Natural killer cell (primary cell): ENCODE measurements at regions of chr20 and their contacts with region 1.

Region 1: GRCh38 chr20:54649511-54649962 is 174.1 kb downstream of the DOK5 start:
- DNase-seq: peak; percentile 28 to 66
- ATAC-seq: peak in 1 of 3 donors; percentile 44
- H3K4me3 ChIP-seq: no peak overlapping the region
- H3K4me3 Mint-ChIP-seq: no peak overlapping the region
- H3K27ac ChIP-seq: no peak overlapping the region
- H3K27ac Mint-ChIP-seq: no peak overlapping the region
- H3K4me1 ChIP-seq: no peaks in the 10 kb centered on the region
- H3K4me1 Mint-ChIP-seq: no peaks in the 10 kb centered on the region
- H3K27me3 ChIP-seq: no peaks in the 10 kb centered on the region
- H3K27me3 Mint-ChIP-seq: peaks cover 9 to 15% of the 10 kb centered on the region in 2 donors
- CTCF ChIP-seq: peak; percentile 67

Region 2: DNA sequence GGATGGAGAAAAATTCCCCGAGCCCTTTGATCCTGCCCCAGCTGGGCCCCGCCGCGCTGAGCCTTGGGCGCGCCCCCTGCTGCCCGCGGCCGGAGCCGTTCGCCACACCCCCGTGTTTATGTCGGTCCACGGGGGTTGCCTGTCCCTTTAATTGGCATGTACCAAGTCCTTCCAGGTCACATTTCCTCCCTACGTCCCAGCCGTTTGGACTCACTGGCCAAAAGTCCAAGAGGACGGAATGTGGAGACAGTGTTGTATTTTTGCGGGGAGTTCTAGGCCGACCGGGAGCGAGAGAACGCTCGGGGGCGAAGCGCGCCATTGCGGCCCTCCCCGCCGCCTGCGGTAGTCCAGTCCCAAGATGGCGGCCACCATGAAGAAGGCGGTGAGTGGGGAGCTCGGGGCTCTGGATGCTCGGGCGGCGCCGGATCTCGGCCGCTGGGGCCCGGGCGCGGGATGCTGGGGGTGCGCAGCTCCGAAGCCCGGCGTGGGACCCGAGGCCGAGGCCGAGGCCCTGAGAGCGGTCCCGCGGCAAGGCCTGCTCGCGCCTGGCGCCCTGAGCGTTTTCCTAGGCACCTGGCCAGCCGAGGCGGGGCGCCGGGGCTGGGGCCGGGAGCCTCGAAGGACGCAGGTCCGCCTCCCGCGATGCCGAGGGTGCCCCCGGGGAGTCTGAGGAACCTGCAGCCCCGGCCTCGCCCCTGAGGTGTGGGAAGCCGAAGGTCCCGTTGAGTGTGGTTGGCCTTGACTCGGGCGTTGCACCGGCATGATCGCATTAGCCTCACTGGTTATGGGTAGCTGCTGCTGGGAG is 441.6 kb before region 1 on chr20 and contains the start of gene PFDN4:
- intact Hi-C with region 1: loop called (anchors 10 kb)
- DNase-seq: peak; percentile 77 to 87
- ATAC-seq: peak; percentile 92 to 94 (median 94)
- H3K4me3 ChIP-seq: peak within 1 kb of the TSS; percentile 74
- H3K4me3 Mint-ChIP-seq: peak within 1 kb of the TSS; percentile 93
- H3K27ac ChIP-seq: peak within 1 kb of the TSS; percentile 96
- H3K27ac Mint-ChIP-seq: peak within 1 kb of the TSS; percentile 97 to 98
- H3K4me1 ChIP-seq: peaks cover 11% of the 10 kb centered on the region
- H3K4me1 Mint-ChIP-seq: peaks cover 22 to 28% of the 10 kb centered on the region in 2 donors
- H3K27me3 ChIP-seq: no peaks in the 10 kb centered on the region
- H3K27me3 Mint-ChIP-seq: no peaks in the 10 kb centered on the region
- CTCF ChIP-seq: peak; percentile 74
- total RNA-seq, gene PFDN4: 16.5 to 22.2 (median 17.1) TPM

Region 3: DNA sequence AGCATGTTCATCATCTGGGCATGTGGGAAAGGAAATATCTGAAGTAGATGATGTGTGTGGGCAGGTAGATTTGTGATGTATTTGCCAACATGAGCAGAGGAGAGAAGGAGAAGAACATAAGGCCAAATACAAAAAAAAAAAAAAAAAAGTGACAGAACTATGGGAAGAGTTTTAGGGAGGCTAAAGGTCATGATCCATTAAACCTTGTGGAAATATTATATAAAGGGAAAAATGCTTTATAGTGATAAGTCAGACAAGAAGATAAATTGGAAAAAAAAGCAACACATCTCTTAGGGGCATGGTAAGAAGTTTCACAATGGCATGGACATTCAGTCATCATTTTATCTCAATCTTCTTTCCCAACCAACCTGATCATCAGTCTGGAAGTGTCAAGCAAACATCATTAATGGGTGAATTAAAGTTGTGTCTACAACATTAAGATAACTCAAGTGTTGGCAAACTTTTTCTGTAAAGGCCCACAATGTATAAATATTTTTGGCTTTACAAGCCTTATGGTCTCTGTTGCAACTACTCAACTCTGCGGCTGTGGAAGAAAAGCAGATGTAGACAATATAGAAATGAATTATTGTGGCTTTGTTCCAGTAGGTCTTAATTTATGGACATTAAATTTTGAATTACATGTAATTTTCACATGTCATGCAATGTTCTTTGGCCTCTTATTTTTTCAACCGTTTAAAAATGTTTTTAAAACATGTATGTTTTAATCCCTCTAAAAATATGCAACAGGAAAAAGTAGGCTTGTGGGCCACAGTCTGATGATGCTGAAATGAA is 57.7 kb after region 1 on chr20:
- intact Hi-C with region 1: no loop called
- DNase-seq: no peak
- ATAC-seq: no peak
- H3K4me3 ChIP-seq: no peak overlapping the region
- H3K4me3 Mint-ChIP-seq: no peak overlapping the region
- H3K27ac ChIP-seq: no peak overlapping the region
- H3K27ac Mint-ChIP-seq: no peak overlapping the region
- H3K4me1 ChIP-seq: no peaks in the 10 kb centered on the region
- H3K4me1 Mint-ChIP-seq: no peaks in the 10 kb centered on the region
- H3K27me3 ChIP-seq: no peaks in the 10 kb centered on the region
- H3K27me3 Mint-ChIP-seq: peaks cover 0 to 6% of the 10 kb centered on the region in 2 donors
- CTCF ChIP-seq: no peak

Region 4: DNA sequence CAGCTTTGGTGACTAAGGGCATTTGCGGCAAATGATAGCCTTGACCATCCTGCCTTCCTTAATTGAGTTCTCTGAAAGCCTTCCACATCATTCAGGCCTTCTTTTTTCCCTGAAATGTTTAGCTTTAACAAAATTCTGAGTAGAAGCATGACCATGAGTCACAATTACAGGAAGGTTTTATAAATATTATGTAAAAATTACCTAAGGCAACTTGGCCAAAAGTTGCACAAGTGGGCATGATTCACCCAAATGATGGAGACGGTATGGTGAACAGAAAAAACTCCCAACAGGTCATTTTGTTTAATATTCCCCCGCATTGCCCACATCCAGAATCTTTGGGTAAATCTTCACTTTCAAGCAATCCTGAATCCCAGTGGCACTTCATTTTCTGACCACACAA is 1636.0 kb after region 1 on chr20:
- intact Hi-C with region 1: no loop called
- DNase-seq: no peak
- ATAC-seq: no peak
- H3K4me3 ChIP-seq: no peak overlapping the region
- H3K4me3 Mint-ChIP-seq: no peak overlapping the region
- H3K27ac ChIP-seq: no peak overlapping the region
- H3K27ac Mint-ChIP-seq: no peak overlapping the region
- H3K4me1 ChIP-seq: no peaks in the 10 kb centered on the region
- H3K4me1 Mint-ChIP-seq: no peaks in the 10 kb centered on the region
- H3K27me3 ChIP-seq: no peaks in the 10 kb centered on the region
- H3K27me3 Mint-ChIP-seq: peaks cover 0 to 2% of the 10 kb centered on the region in 2 donors
- CTCF ChIP-seq: no peak